ENCODE measurements at regions of chr14 and their contacts with region 1.

Region 1: DNA sequence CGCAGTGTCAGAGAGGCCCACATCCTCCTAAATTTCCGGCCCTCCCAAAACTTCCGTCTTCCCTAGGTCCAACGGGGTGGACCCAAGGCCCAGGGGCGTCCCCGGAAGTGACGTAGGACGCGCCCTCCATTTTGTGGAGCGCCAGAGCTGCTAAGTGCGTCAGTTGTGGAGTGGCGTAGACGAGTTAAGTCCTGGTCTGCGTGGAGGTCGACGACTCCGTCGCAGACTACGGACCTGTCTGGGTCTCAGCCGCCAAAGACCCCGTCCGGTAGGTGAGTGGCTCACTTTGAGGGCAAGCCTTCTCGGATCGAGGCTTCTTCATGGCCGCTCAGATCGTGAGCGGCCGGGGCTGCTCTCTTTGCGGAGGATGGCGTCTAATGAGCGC is at the start of gene SRSF5:
- DNase-seq: peak; percentile 96
- ATAC-seq: peak; percentile 82
- H3K4me3 Mint-ChIP-seq: peak within 1 kb of the TSS; percentile 98
- H3K27ac Mint-ChIP-seq: peak within 1 kb of the TSS; percentile 100
- H3K4me1 Mint-ChIP-seq: peaks cover 60% of the 10 kb centered on the region
- H3K27me3 Mint-ChIP-seq: no peaks in the 10 kb centered on the region
- total RNA-seq, gene SRSF5: 283 to 301 TPM

Region 2: DNA sequence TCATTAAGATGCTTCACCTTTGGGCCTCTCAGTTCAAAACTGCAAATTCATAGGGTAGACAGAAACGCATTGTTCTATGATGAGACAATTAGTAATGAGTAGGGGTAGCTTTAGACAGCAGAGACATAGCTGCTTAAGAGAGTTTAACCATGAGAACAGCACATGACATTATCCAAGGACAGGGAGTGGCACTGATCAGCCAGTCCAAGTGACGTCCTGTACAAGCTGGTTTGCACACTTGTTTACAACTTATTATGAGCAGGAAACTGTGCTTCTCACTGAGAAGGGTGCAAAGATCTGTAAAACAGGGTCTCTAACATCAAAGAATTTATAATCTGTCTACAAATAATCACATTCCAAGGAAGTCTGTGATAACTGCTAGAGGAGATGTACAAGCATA is 11.2 kb before region 1 on chr14:
- CTCF ChIA-PET with region 1: interaction called, 8 read pairs
- POLR2A ChIA-PET with region 1: interaction called, 27 read pairs
- DNase-seq: no peak
- ATAC-seq: no peak
- H3K4me3 Mint-ChIP-seq: no peak overlapping the region
- H3K27ac Mint-ChIP-seq: peak overlapping the region; percentile 69
- H3K4me1 Mint-ChIP-seq: peaks cover 15% of the 10 kb centered on the region
- H3K27me3 Mint-ChIP-seq: no peaks in the 10 kb centered on the region

Region 3: GRCh38 chr14:69808919-69809808 is 42.2 kb after region 1 on chr14:
- CTCF ChIA-PET with region 1: no interaction called
- POLR2A ChIA-PET with region 1: no interaction called
- DNase-seq: no peak
- ATAC-seq: no peak
- H3K4me3 Mint-ChIP-seq: no peak overlapping the region
- H3K27ac Mint-ChIP-seq: no peak overlapping the region
- H3K4me1 Mint-ChIP-seq: no peaks in the 10 kb centered on the region
- H3K27me3 Mint-ChIP-seq: peaks cover 22% of the 10 kb centered on the region

Region 4: DNA sequence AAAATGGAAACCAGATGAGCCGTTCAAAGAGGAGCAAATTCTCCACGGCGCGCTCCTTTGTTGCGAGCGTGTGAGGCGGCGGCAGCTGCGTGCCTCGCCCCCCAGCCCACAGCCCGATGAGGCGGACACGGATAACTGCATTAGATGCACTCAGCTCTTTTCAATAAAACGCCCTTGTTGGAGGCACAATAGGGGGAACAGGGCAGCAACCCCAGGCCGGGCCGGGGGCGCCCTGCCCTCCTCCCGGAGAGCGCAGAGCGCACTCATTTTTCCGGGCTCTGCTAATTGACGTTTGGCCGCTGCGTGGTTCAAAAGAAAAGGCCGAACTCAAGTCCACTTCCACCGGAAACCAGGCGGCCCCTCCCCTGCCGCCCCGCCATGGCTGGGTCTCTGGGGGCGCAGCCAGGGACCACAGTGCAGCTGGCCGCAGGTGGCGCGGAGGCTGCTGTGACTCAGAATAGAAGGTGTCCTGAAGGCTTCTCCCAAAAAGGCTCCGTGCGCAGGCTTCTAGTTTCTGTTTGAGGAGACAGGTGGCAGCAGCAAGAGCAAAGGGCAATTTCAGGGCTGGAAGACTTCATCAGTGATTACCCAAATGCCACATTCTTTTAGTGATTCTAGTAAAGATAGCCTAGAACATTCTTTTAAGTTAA is 83.2 kb after region 1 on chr14:
- CTCF ChIA-PET with region 1: no interaction called
- POLR2A ChIA-PET with region 1: no interaction called
- DNase-seq: no peak
- ATAC-seq: no peak
- H3K4me3 Mint-ChIP-seq: no peak overlapping the region
- H3K27ac Mint-ChIP-seq: no peak overlapping the region
- H3K4me1 Mint-ChIP-seq: no peaks in the 10 kb centered on the region
- H3K27me3 Mint-ChIP-seq: peaks cover 9% of the 10 kb centered on the region

Region 5: DNA sequence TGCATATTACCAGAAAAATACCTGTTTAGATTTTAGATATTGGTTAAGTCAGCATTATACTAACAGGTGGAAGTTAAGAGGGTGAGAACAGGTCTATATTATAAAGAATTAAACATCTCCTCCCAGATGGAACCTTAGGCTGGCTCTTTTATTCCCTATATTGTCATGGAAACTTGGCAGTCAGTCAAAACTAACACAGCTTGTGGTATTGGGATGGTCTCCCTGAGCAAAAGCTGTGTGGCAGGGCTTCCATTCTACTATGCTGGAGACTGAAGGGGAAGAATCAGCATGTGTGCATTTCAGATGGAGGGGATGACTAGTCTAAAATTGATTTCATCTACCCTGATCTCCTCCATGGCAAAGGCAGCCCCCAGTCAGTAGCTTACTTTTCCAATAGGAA is 178.9 kb after region 1 on chr14:
- CTCF ChIA-PET with region 1: no interaction called
- POLR2A ChIA-PET with region 1: no interaction called
- DNase-seq: no peak
- ATAC-seq: no peak
- H3K4me3 Mint-ChIP-seq: no peak overlapping the region
- H3K27ac Mint-ChIP-seq: no peak overlapping the region
- H3K4me1 Mint-ChIP-seq: no peaks in the 10 kb centered on the region
- H3K27me3 Mint-ChIP-seq: peaks cover 3% of the 10 kb centered on the region

Measured in activated CD8-positive, alpha-beta T cell treated with anti-CD3 and anti-CD28 coated beads, Interleukin-2, amount 10 ng/mL, durations not matched to agents 7 days and 5 days (primary cell).